PC-3 (cell line): ENCODE measurements at regions of chr10 and their contacts with region 1.

Region 1: GRCh38 chr10:124092860-124093773 is at the start of gene CHST15:
- DNase-seq: peak; percentile 83
- ATAC-seq: peak; percentile 65
- H3K4me3 ChIP-seq: peak within 1 kb of the TSS; percentile 87
- H3K27ac ChIP-seq: peak within 1 kb of the TSS; percentile 46
- H3K4me1 ChIP-seq: peaks cover 14% of the 10 kb centered on the region
- H3K27me3 ChIP-seq: no peaks in the 10 kb centered on the region
- CTCF ChIP-seq: peak; percentile 32
- total RNA-seq, gene CHST15: 16.4 and 17.1 TPM in 2 replicates

Region 2: DNA sequence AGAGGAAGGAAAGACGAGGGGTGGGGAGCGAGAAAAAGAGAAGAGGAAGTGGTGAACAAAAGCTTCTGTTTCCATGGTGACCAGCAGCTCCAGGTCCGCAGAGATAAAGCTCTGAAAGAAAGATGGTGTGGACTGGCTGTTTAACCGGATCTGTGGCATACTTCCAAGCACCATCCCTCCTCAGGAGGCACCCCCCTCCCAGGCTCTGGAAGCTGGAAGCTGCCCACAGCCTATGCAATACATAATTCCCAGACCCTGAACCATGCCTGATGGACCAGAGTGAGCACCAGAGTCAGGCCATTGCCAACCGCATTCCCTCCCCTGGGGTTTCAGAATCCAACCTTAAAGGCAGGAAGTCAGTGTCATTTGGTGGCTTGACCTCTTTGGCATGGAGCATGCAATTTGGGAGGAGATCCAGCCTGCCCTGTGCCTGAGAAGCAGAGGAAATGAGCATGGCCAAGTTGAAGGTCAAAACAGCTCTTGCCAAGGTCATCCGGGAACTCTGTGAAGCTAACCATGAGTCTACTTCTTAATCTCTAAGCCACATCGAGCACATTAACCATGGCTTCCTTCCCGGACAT is 179.3 kb before region 1 on chr10:
- CTCF ChIA-PET with region 1: no interaction called
- POLR2A ChIA-PET with region 1: no interaction called
- intact Hi-C with region 1: no loop called
- DNase-seq: no peak
- ATAC-seq: no peak
- H3K4me3 ChIP-seq: no peak overlapping the region
- H3K27ac ChIP-seq: no peak overlapping the region
- H3K4me1 ChIP-seq: no peaks in the 10 kb centered on the region
- H3K27me3 ChIP-seq: peaks cover 54% of the 10 kb centered on the region
- CTCF ChIP-seq: no peak

Region 3: DNA sequence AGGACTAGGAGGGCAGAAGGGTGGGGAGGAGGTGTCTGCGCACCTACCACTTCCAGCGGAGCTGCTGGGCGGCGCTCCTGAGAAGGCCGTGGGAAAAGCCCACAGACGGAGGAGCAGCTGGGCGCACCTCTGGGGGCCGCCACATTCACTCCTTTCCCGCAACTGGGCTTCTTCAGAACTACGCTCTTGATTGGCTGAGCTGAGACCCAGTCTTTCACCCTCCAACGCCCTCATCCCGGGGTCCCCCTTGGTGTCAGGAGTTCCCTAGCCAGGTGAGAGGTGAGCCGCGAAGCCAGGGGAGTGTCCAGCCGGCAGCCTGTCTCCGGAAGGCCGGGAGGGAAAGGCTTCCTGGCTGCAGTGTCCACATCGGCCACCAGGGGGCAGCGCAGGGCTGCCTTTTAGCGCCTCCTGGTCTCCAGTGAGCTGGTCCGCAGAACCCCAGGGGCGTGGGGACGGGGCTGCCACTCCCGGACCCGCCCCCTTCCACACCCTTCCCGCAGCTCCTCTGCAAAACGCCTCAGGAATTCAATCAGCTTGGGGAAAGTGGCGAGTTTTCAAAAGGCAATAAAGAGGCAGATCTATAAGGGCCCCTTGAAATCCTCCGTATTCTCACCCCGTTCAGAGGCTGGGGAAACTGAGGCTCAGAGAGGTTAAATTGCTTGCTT is 98.6 kb before region 1 on chr10:
- CTCF ChIA-PET with region 1: interaction called, 9 read pairs
- POLR2A ChIA-PET with region 1: no interaction called
- intact Hi-C with region 1: loop called (anchors 2 kb)
- DNase-seq: peak; percentile 93
- ATAC-seq: peak; percentile 66
- H3K4me3 ChIP-seq: peak overlapping the region; percentile 66
- H3K27ac ChIP-seq: peak overlapping the region; percentile 92
- H3K4me1 ChIP-seq: peaks cover 41% of the 10 kb centered on the region
- H3K27me3 ChIP-seq: no peaks in the 10 kb centered on the region
- CTCF ChIP-seq: peak; percentile 82

Region 4: DNA sequence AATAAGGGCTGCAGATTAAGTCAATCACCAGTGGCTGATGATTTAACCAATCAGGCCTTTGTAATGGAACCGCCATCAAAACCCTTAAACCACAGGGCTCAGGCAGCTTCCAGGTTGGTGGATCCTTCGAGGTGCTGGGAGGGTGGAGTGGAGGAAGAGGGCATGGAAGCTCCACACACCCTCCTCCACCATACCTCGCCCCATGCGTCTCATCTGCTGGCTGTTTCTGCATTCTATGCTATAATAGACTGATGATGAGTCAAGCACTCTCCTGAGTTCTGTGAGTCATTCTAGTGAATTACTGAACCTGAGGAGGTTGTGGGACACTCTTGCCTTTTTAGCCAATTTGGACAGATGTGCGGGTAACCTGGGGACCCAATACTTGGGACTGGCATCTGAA is 43.6 kb before region 1 on chr10:
- CTCF ChIA-PET with region 1: no interaction called
- POLR2A ChIA-PET with region 1: no interaction called
- intact Hi-C with region 1: loop called (anchors 5 kb)
- DNase-seq: peak; percentile 73
- ATAC-seq: peak; percentile 87
- H3K4me3 ChIP-seq: no peak overlapping the region
- H3K27ac ChIP-seq: peak overlapping the region; percentile 36; the same call in 1 of the 2 replicates
- H3K4me1 ChIP-seq: peaks cover 26% of the 10 kb centered on the region
- H3K27me3 ChIP-seq: no peaks in the 10 kb centered on the region
- CTCF ChIP-seq: no peak

Region 5: GRCh38 chr10:124106241-124106879 is 13.2 kb after region 1 on chr10:
- CTCF ChIA-PET with region 1: no interaction called
- POLR2A ChIA-PET with region 1: no interaction called
- intact Hi-C with region 1: loop called (anchors 2 kb)
- DNase-seq: peak; percentile 91
- ATAC-seq: peak; percentile 77
- H3K4me3 ChIP-seq: peak overlapping the region; percentile 53
- H3K27ac ChIP-seq: peak overlapping the region; percentile 78
- H3K4me1 ChIP-seq: peaks cover 26% of the 10 kb centered on the region
- H3K27me3 ChIP-seq: no peaks in the 10 kb centered on the region
- CTCF ChIP-seq: no peak

Region 6: DNA sequence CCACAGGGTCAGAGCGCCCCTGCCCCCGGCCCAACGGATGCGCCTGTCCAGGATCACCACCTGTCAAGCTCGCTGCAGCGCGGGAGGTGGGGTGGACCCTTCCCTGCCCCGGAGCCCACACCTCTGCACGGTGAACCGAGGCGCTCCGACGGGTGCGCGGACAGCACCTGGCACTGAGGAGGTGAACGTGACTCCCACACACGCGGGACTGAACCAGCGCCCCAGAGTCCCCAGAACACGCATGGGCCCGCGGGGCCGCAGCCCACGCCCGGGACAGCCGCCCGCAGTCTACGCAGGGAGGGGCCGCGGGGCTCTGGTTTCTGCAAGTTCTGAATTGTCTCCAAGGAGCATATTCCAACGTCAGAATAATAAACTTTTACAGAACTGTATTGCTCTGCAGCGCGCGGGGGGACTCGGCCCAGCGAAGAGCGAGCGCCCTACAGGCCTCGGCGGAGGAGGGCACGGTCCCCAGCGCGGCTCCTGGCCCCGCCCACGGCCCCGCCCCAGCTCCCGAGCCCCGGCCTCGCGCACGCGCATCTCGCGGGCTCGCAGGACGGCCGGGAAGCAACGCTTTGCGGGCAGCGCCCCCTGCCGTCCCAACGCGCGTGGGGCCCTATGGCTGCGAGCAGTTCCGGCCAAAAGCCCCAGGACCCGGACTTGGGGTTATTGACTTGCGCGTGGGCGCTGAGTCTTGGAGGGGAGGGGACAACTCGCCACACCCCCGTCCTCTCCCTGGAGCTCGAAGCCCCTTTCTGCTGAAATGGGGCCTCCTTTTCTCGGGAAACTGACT is 295.9 kb after region 1 on chr10:
- CTCF ChIA-PET with region 1: interaction called, 4 read pairs
- POLR2A ChIA-PET with region 1: no interaction called
- intact Hi-C with region 1: loop called (anchors 10 kb)
- DNase-seq: peak; percentile 86
- ATAC-seq: peak; percentile 87
- H3K4me3 ChIP-seq: peak overlapping the region; percentile 67
- H3K27ac ChIP-seq: no peak overlapping the region
- H3K4me1 ChIP-seq: peaks cover 11% of the 10 kb centered on the region; the same call in 1 of the 2 replicates
- H3K27me3 ChIP-seq: no peaks in the 10 kb centered on the region
- CTCF ChIP-seq: peak; percentile 73

Region 7: DNA sequence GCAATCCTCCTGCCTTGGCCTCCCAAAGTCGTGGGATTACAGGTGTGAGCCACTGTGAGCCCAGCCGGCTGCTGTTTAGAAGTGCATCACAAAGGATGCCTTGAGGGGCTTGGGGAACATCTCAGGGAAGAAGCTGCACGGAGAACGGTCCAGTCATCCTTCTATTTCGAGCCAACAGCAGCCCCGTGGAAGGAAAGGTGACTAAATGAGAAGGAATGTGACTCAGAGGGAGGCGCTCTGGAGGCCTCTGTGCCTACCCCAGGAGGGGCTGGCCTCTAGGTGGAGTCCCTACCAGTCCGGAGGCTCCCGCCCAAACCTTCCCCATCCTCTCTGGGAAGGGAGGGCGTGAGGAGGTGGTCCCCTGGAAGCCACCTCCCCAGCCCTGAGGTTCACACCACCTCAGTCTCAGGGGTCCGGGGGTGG is 991.1 kb after region 1 on chr10:
- CTCF ChIA-PET with region 1: no interaction called
- POLR2A ChIA-PET with region 1: no interaction called
- intact Hi-C with region 1: no loop called
- DNase-seq: peak; percentile 87
- ATAC-seq: peak; percentile 86
- H3K4me3 ChIP-seq: no peak overlapping the region
- H3K27ac ChIP-seq: peak overlapping the region; percentile 77
- H3K4me1 ChIP-seq: peaks cover 28% of the 10 kb centered on the region
- H3K27me3 ChIP-seq: no peaks in the 10 kb centered on the region
- CTCF ChIP-seq: peak; percentile 40; the same call in 1 of the 2 replicates